Activated CD4-positive, alpha-beta T cell treated with anti-CD3 and anti-CD28 coated beads for 36 hours (primary cell): ENCODE measurements at regions of chr15 and their contacts with region 1.

Region 1: GRCh38 chr15:92625251-92625980 is 30.2 kb downstream of the FAM174B start:
- DNase-seq: peak; percentile 46
- ATAC-seq: peak; percentile 89
- H3K4me3 Mint-ChIP-seq: no peak overlapping the region
- H3K27ac Mint-ChIP-seq: peak overlapping the region; percentile 90
- H3K4me1 Mint-ChIP-seq: peaks cover 31% of the 10 kb centered on the region
- H3K27me3 Mint-ChIP-seq: peaks cover 3% of the 10 kb centered on the region

Region 2: GRCh38 chr15:91852741-91853510 is 772.5 kb before region 1 on chr15:
- CTCF ChIA-PET with region 1: no interaction called
- POLR2A ChIA-PET with region 1: no interaction called
- intact Hi-C with region 1: loop called in 1 of 2 experiments (anchors 1 kb)
- DNase-seq: peak; percentile 82
- ATAC-seq: peak; percentile 68
- H3K4me3 Mint-ChIP-seq: peak overlapping the region; percentile 74
- H3K27ac Mint-ChIP-seq: peak overlapping the region; percentile 88
- H3K4me1 Mint-ChIP-seq: peaks cover 55% of the 10 kb centered on the region
- H3K27me3 Mint-ChIP-seq: peaks cover 3% of the 10 kb centered on the region

Region 3: GRCh38 chr15:92268906-92269305 is 356.5 kb before region 1 on chr15:
- CTCF ChIA-PET with region 1: no interaction called
- POLR2A ChIA-PET with region 1: no interaction called
- intact Hi-C with region 1: no loop called
- DNase-seq: no peak
- ATAC-seq: no peak
- H3K4me3 Mint-ChIP-seq: no peak overlapping the region
- H3K27ac Mint-ChIP-seq: no peak overlapping the region
- H3K4me1 Mint-ChIP-seq: no peaks in the 10 kb centered on the region
- H3K27me3 Mint-ChIP-seq: peaks cover 24% of the 10 kb centered on the region

Region 4: GRCh38 chr15:92521624-92522008 is 103.8 kb before region 1 on chr15:
- CTCF ChIA-PET with region 1: no interaction called
- POLR2A ChIA-PET with region 1: no interaction called
- intact Hi-C with region 1: loop called in 1 of 2 experiments (anchors 5 kb)
- DNase-seq: peak; percentile 75
- ATAC-seq: peak; percentile 83
- H3K4me3 Mint-ChIP-seq: no peak overlapping the region
- H3K27ac Mint-ChIP-seq: no peak overlapping the region
- H3K4me1 Mint-ChIP-seq: peaks cover 8% of the 10 kb centered on the region
- H3K27me3 Mint-ChIP-seq: no peaks in the 10 kb centered on the region

Region 5: DNA sequence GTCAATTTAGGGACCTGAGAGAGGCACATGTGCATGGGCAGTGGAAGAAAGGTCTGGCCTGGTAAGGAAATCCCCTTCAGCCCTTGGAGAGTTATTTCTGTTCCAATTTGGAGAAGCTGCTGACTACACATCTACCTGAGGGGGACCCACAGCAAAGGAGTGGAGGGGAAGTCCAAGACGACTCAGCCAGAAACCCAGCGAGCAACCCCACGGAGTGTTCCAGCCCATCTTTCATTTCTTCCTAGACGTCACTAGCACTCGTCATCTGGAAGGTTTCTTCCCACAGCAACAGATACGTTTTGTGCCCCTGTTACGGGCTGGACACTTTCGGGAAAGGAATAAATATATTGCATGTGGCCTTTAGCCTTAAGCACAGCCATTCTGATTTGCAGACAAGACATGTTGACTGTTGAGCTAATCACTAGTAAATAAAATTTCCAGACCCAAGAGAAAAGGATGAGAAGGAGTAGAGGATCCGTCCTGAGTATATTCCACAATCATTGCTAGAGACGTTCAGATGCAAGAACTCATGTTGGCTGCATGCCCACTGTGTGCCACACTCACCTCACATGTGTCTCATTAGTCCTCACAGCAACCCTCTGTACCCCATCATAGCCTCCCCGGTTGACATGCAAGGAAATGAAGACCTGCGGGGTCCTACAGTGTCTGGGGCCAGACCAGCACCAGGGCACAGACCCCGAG is 38.0 kb after region 1 on chr15:
- CTCF ChIA-PET with region 1: no interaction called
- POLR2A ChIA-PET with region 1: no interaction called
- intact Hi-C with region 1: loop called in 1 of 2 experiments (anchors 1 kb)
- DNase-seq: peak; percentile 60
- ATAC-seq: peak; percentile 89
- H3K4me3 Mint-ChIP-seq: no peak overlapping the region
- H3K27ac Mint-ChIP-seq: no peak overlapping the region
- H3K4me1 Mint-ChIP-seq: peaks cover 21% of the 10 kb centered on the region
- H3K27me3 Mint-ChIP-seq: peaks cover 4% of the 10 kb centered on the region

Region 6: GRCh38 chr15:92803847-92804609 is 178.6 kb after region 1 on chr15:
- CTCF ChIA-PET with region 1: no interaction called
- POLR2A ChIA-PET with region 1: no interaction called
- intact Hi-C with region 1: loop called in 1 of 2 experiments (anchors 1 kb)
- DNase-seq: peak; percentile 91
- ATAC-seq: peak; percentile 86
- H3K4me3 Mint-ChIP-seq: peak overlapping the region; percentile 17
- H3K27ac Mint-ChIP-seq: peak overlapping the region; percentile 94
- H3K4me1 Mint-ChIP-seq: peaks cover 36% of the 10 kb centered on the region
- H3K27me3 Mint-ChIP-seq: no peaks in the 10 kb centered on the region

Region 7: GRCh38 chr15:92903941-92904831 is 278.8 kb after region 1 on chr15:
- CTCF ChIA-PET with region 1: interaction called, 3 read pairs
- POLR2A ChIA-PET with region 1: no interaction called
- intact Hi-C with region 1: loop called (anchors 2 to 5 kb)
- DNase-seq: peak; percentile 100
- ATAC-seq: peak; percentile 80
- H3K4me3 Mint-ChIP-seq: peak overlapping the region; percentile 81
- H3K27ac Mint-ChIP-seq: peak overlapping the region; percentile 98
- H3K4me1 Mint-ChIP-seq: peaks cover 48% of the 10 kb centered on the region
- H3K27me3 Mint-ChIP-seq: no peaks in the 10 kb centered on the region

Region 8: GRCh38 chr15:94306700-94307650 is 1681.6 kb after region 1 on chr15:
- CTCF ChIA-PET with region 1: no interaction called
- POLR2A ChIA-PET with region 1: no interaction called
- intact Hi-C with region 1: loop called in 1 of 2 experiments (anchors 5 kb)
- DNase-seq: peak; percentile 38
- ATAC-seq: peak; percentile 74
- H3K4me3 Mint-ChIP-seq: no peak overlapping the region
- H3K27ac Mint-ChIP-seq: peak overlapping the region; percentile 87
- H3K4me1 Mint-ChIP-seq: peaks cover 43% of the 10 kb centered on the region
- H3K27me3 Mint-ChIP-seq: no peaks in the 10 kb centered on the region